Activated naive CD4-positive, alpha-beta T cell treated with anti-CD3 and anti-CD28 coated beads for 36 hours (primary cell): ENCODE measurements at regions of chr2 and their contacts with region 1.

Region 1: GRCh38 chr2:197499594-197500526 is at the starts of genes HSPD1 and HSPE1:
- DNase-seq: peak; percentile 99
- H3K4me3 Mint-ChIP-seq: peak within 1 kb of the TSS; percentile 92
- H3K27ac Mint-ChIP-seq: peak within 1 kb of the TSS; percentile 98
- H3K4me1 Mint-ChIP-seq: peaks cover 51% of the 10 kb centered on the region
- H3K27me3 Mint-ChIP-seq: no peaks in the 10 kb centered on the region
- total RNA-seq, gene HSPD1: 1,191 to 1,210 TPM
- total RNA-seq, gene HSPE1: 294 to 310 TPM

Region 2: DNA sequence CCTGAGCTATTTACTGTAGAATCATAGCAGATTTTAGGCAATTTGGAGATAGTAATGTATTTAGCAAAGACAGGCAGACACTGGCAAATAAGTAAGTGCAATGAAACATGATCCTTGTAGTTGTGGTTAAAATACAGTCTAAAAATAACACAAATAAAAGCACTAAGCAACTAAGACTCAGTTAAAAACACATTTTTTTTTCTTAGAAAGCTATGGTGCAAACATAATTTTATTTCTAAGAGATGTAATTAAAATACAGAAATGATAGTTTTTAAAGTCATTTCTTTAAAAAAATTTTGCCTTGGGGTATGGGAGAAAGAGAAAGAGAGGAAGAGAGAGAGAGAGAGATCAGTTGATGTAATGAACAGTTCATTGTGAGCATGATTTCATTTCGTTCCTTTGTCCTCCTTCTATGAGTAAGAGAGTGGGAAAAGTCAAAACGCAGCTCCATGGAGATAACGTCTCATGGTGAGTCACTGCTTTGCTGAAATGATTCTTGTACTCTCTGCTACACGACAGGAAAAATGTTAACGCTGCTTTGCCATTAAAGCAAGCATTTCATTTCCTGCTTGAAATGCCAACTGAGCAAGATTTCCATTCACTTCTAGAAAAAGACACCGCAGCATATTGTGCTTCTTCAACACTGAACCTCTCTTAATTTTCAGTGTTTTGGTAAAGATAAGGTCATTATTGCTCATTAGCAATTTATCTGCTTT is 512.1 kb before region 1 on chr2:
- CTCF ChIA-PET with region 1: no interaction called
- intact Hi-C with region 1: loop called (anchors 2 kb)
- DNase-seq: peak; percentile 76
- H3K4me3 Mint-ChIP-seq: peak overlapping the region; percentile 17
- H3K27ac Mint-ChIP-seq: peak overlapping the region; percentile 98
- H3K4me1 Mint-ChIP-seq: peaks cover 78% of the 10 kb centered on the region
- H3K27me3 Mint-ChIP-seq: no peaks in the 10 kb centered on the region

Region 3: GRCh38 chr2:197434541-197435513 is 65.0 kb before region 1 on chr2 and contains the start of gene SF3B1:
- CTCF ChIA-PET with region 1: no interaction called
- intact Hi-C with region 1: loop called (anchors 1 kb)
- DNase-seq: peak; percentile 100
- H3K4me3 Mint-ChIP-seq: peak within 1 kb of the TSS; percentile 99
- H3K27ac Mint-ChIP-seq: peak within 1 kb of the TSS; percentile 100
- H3K4me1 Mint-ChIP-seq: peaks cover 46% of the 10 kb centered on the region
- H3K27me3 Mint-ChIP-seq: no peaks in the 10 kb centered on the region
- total RNA-seq, gene SF3B1: 235 to 248 TPM

Region 4: GRCh38 chr2:197487385-197487784 is 12.5 kb before region 1 on chr2:
- CTCF ChIA-PET with region 1: no interaction called
- intact Hi-C with region 1: loop called (anchors 1 kb)
- DNase-seq: no peak
- H3K4me3 Mint-ChIP-seq: no peak overlapping the region
- H3K27ac Mint-ChIP-seq: peak overlapping the region; percentile 51
- H3K4me1 Mint-ChIP-seq: peaks cover 33% of the 10 kb centered on the region
- H3K27me3 Mint-ChIP-seq: no peaks in the 10 kb centered on the region

Region 5: DNA sequence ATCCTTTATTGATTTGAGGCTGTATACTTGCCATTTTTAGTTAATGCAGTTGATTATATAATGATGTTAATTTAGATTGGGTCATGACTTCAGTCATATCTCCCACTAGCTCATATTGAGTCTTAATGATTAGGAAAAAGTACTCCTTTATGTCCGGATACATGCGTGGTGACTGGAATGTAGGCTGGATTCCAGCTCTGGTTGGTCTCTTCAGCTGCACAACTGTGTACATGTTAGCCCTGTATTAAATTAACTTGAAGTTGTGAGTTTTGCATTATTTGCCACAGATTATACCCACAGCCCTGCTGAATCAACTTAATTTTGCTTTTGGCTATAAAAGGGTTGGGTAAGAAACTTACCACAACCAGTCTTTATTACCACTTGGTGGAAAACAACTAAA is 38.6 kb after region 1 on chr2:
- CTCF ChIA-PET with region 1: interaction called, 3 read pairs
- intact Hi-C with region 1: loop called (anchors 2 kb)
- DNase-seq: no peak
- H3K4me3 Mint-ChIP-seq: no peak overlapping the region
- H3K27ac Mint-ChIP-seq: peak overlapping the region; percentile 24
- H3K4me1 Mint-ChIP-seq: peaks cover 36% of the 10 kb centered on the region
- H3K27me3 Mint-ChIP-seq: no peaks in the 10 kb centered on the region

Region 6: GRCh38 chr2:197777823-197778407 is 278.1 kb after region 1 on chr2:
- CTCF ChIA-PET with region 1: no interaction called
- intact Hi-C with region 1: loop called (anchors 5 kb)
- DNase-seq: peak; percentile 52
- H3K4me3 Mint-ChIP-seq: no peak overlapping the region
- H3K27ac Mint-ChIP-seq: no peak overlapping the region
- H3K4me1 Mint-ChIP-seq: no peaks in the 10 kb centered on the region
- H3K27me3 Mint-ChIP-seq: peaks cover 5% of the 10 kb centered on the region